Endothelial cell of umbilical vein (primary cell): ENCODE measurements at regions of chr10 and their contacts with region 1.

Region 1: GRCh38 chr10:131943021-131943814 is 38.5 kb downstream of the BNIP3 start:
- DNase-seq: no peak
- H3K4me3 ChIP-seq: no peak overlapping the region
- H3K27ac ChIP-seq: no peak overlapping the region
- H3K4me1 ChIP-seq: peaks cover 30% of the 10 kb centered on the region
- H3K27me3 ChIP-seq: no peaks in the 10 kb centered on the region
- CTCF ChIP-seq: peak; percentile 32 to 55
- POLR2A ChIP-seq: no peak

Region 2: GRCh38 chr10:131869344-131869743 is 73.9 kb before region 1 on chr10:
- CTCF ChIA-PET with region 1: no interaction called
- POLR2A ChIA-PET with region 1: no interaction called
- dilution Hi-C with region 1: no loop called
- intact Hi-C with region 1: no loop called
- DNase-seq: no peak
- H3K4me3 ChIP-seq: no peak overlapping the region
- H3K27ac ChIP-seq: no peak overlapping the region
- H3K4me1 ChIP-seq: no peaks in the 10 kb centered on the region
- H3K27me3 ChIP-seq: no peaks in the 10 kb centered on the region
- CTCF ChIP-seq: no peak
- POLR2A ChIP-seq: no peak

Region 3: GRCh38 chr10:131900350-131901146 is 42.7 kb before region 1 on chr10 and contains the start of gene PPP2R2D:
- CTCF ChIA-PET with region 1: interaction called, 19 read pairs
- POLR2A ChIA-PET with region 1: interaction called, 6 read pairs
- dilution Hi-C with region 1: no loop called
- intact Hi-C with region 1: loop called (anchors 1 kb)
- DNase-seq: peak; percentile 90
- H3K4me3 ChIP-seq: peak within 1 kb of the TSS; percentile 87 to 95 (median 93)
- H3K27ac ChIP-seq: peak within 1 kb of the TSS; percentile 72
- H3K4me1 ChIP-seq: peaks cover 23% of the 10 kb centered on the region
- H3K27me3 ChIP-seq: peaks cover 12 to 18% of the 10 kb centered on the region in 2 experiments
- CTCF ChIP-seq: no peak
- POLR2A ChIP-seq: peak; percentile 45
- total RNA-seq, gene PPP2R2D: 33.9 and 36.3 TPM in 2 replicates

Region 4: GRCh38 chr10:131933016-131933695 is 10.1 kb before region 1 on chr10:
- CTCF ChIA-PET with region 1: interaction called, 15 read pairs
- POLR2A ChIA-PET with region 1: interaction called, 4 read pairs
- dilution Hi-C with region 1: no loop called
- intact Hi-C with region 1: loop called (anchors 1 kb)
- DNase-seq: no peak
- H3K4me3 ChIP-seq: no peak overlapping the region
- H3K27ac ChIP-seq: no peak overlapping the region
- H3K4me1 ChIP-seq: peaks cover 41% of the 10 kb centered on the region
- H3K27me3 ChIP-seq: no peaks in the 10 kb centered on the region
- CTCF ChIP-seq: no peak
- POLR2A ChIP-seq: no peak

Region 5: GRCh38 chr10:131961777-131962662 is 18.8 kb after region 1 on chr10:
- CTCF ChIA-PET with region 1: interaction called, 11 read pairs
- POLR2A ChIA-PET with region 1: no interaction called
- dilution Hi-C with region 1: no loop called
- intact Hi-C with region 1: no loop called
- DNase-seq: no peak
- H3K4me3 ChIP-seq: no peak overlapping the region
- H3K27ac ChIP-seq: no peak overlapping the region
- H3K4me1 ChIP-seq: no peaks in the 10 kb centered on the region
- H3K27me3 ChIP-seq: no peaks in the 10 kb centered on the region
- CTCF ChIP-seq: no peak
- POLR2A ChIP-seq: no peak

Region 6: DNA sequence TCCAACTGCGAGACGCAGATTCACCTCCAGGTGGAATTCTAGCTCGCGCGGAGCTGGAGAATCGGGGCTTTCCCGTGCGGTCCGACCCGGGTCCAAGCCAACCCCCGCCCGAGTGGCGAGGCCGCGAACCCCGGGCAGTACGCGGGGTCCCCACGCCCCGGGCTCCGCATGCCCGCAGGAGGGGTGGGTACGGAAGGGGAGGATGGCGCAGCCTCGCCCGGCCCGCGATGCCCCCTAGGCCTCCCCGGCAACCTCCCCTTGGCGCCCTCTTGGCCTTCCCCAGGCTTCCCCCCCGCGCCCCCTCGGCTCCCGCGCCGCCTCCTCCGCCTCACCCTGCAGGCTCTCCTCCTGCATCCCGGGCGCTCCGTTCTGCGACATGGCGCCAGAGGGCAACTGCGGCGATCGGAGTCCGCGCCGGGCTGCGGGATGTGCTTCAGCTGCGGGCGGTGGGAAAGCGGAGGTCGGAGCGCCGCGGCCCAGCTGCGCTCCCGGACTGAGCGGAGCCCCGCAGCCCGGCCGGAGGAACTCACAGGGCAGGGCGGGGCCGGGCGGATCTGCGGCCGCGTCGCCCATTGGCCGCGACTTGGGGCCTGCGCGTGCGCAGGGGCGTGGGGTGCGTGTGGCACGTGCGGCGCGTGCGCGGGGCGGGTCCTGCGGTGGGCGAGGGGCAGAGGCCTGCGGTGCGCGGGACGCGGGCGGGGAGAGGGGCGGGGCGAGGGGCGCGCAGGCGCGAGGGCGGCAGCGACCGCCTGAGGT is 38.4 kb after region 1 on chr10 and contains the start of gene BNIP3:
- CTCF ChIA-PET with region 1: interaction called, 4 read pairs
- POLR2A ChIA-PET with region 1: interaction called, 3 read pairs
- dilution Hi-C with region 1: no loop called
- intact Hi-C with region 1: loop called (anchors 1 kb)
- DNase-seq: peak; percentile 97
- H3K4me3 ChIP-seq: peak within 1 kb of the TSS; percentile 88 to 98 (median 94)
- H3K27ac ChIP-seq: peak within 1 kb of the TSS; percentile 30
- H3K4me1 ChIP-seq: peaks cover 24% of the 10 kb centered on the region
- H3K27me3 ChIP-seq: no peaks in the 10 kb centered on the region
- CTCF ChIP-seq: peak in 1 of 2 donors; percentile 4
- POLR2A ChIP-seq: peak; percentile 81
- total RNA-seq, gene BNIP3: 40.1 and 51.4 TPM in 2 replicates